Breast epithelium (tissue), 4 donors: ENCODE measurements at regions of chr2 and their contacts with region 1.

Region 1: DNA sequence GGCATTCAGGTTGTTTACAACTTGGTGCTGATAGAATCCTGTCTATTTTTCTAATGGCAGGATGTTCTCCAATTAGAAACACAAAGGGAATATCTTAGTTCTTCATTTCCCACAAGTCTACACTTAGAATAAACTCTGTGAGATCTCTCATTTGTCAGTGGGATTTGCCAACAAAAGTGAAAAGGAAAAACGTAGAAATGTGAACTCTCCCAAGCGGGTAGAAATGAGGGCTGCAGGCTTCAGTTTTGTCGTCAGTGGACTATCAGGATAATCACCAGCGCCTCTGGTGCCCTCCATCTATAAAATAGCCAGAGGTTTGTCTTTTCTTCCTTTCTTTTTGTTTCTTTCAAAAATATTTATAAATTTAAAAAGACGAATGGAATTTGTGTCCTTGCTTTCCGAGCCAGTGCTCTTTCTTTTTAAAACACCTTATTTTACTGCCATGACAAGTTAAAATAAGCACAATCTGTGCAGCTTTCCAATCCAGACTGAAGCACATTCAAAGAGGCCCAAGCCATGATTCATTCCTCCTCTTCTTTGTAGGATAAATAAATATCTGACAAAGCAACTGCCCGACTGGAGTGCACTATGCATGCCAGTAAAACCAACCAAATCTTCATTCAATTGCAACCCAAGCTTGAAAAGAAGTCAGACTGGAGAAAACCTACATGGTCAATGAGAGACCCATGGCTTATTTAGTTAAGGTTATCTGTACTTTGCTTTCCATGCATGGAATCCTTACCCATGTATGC is 185.8 kb downstream of the ANKRD44 start:
- DNase-seq: no peak
- H3K4me3 ChIP-seq: no peak overlapping the region
- H3K27ac ChIP-seq: no peak overlapping the region
- H3K4me1 ChIP-seq: no peaks in the 10 kb centered on the region
- H3K27me3 ChIP-seq: no peaks in the 10 kb centered on the region
- CTCF ChIP-seq: no peak
- POLR2A ChIP-seq: no peak

Region 2: DNA sequence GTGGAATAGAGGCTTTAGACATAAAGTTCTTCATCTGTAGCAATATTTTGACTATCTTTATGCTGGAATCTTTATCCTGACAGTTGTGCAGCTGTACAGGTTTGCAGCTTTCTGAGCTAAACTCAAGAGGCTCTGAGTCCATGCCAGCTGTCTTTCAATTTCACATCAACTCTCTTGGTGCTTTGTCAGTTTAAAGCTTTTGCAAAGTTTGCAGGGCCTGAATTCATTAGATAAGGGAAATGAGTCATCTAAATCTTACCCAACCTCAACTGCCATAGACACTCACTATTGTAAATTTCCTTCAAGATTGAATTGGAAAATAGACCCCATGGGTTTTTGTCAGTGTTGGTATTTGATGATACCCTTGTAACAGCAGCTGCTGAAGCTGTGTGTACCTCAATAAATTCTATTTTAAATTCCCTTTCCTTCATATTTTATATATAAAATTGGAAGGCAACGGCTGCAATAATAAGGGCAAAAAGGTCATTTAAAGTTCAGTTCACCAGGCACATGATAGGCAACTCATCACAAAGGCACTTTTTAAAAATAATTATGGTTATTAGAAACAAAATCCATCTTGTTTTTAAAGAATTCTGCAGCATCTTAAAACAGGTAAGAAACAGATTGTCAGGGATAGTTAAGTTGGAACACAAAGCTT is 1637.7 kb before region 1 on chr2:
- intact Hi-C with region 1: loop called (anchors 10 kb)
- DNase-seq: no peak
- H3K4me3 ChIP-seq: no peak overlapping the region
- H3K27ac ChIP-seq: no peak overlapping the region
- H3K4me1 ChIP-seq: no peaks in the 10 kb centered on the region
- H3K27me3 ChIP-seq: no peaks in the 10 kb centered on the region
- CTCF ChIP-seq: no peak
- POLR2A ChIP-seq: no peak

Region 3: GRCh38 chr2:195737173-195738043 is 1387.4 kb before region 1 on chr2:
- intact Hi-C with region 1: no loop called
- DNase-seq: no peak
- H3K4me3 ChIP-seq: no peak overlapping the region
- H3K27ac ChIP-seq: no peak overlapping the region
- H3K4me1 ChIP-seq: no peaks in the 10 kb centered on the region
- H3K27me3 ChIP-seq: no peaks in the 10 kb centered on the region
- CTCF ChIP-seq: no peak
- POLR2A ChIP-seq: no peak

Region 4: DNA sequence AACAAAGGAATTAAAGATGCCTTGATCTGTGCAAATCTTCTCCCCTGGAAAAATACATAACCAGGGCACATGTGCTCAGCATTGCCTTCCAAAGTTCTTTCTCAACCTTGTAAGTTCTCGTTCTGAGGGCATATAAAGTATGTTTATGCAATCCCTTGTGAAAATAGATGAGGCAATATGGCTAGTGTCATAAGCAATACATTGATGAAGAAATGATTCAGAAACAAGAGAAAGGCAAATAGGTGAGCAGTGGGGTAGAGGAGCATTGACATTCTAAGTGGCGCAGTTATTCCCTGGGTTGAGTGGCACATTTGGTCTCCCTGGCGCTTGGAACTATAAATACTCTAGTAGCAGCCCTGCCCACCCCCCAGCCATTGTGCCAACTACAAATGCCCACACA is 140.9 kb before region 1 on chr2:
- intact Hi-C with region 1: no loop called
- DNase-seq: no peak
- H3K4me3 ChIP-seq: no peak overlapping the region
- H3K27ac ChIP-seq: no peak overlapping the region
- H3K4me1 ChIP-seq: no peaks in the 10 kb centered on the region
- H3K27me3 ChIP-seq: no peaks in the 10 kb centered on the region
- CTCF ChIP-seq: no peak
- POLR2A ChIP-seq: no peak